Endothelial cell of umbilical vein (primary cell): ENCODE measurements at regions of chr7 and their contacts with region 1.

Region 1: GRCh38 chr7:30459591-30460257 is 18.9 kb downstream of the NOD1 start:
- DNase-seq: peak; percentile 79
- H3K4me3 ChIP-seq: no peak overlapping the region
- H3K27ac ChIP-seq: peak overlapping the region; percentile 56
- H3K4me1 ChIP-seq: peaks cover 18% of the 10 kb centered on the region
- H3K27me3 ChIP-seq: no peaks in the 10 kb centered on the region
- CTCF ChIP-seq: no peak
- POLR2A ChIP-seq: no peak

Region 2: GRCh38 chr7:30478349-30479201 is 18.9 kb after region 1 on chr7 and contains the start of gene NOD1:
- CTCF ChIA-PET with region 1: interaction called, 10 read pairs
- POLR2A ChIA-PET with region 1: interaction called, 3 read pairs
- dilution Hi-C with region 1: no loop called
- intact Hi-C with region 1: no loop called
- DNase-seq: peak; percentile 81
- H3K4me3 ChIP-seq: peak within 1 kb of the TSS; percentile 60 to 92 (median 79)
- H3K27ac ChIP-seq: peak within 1 kb of the TSS; percentile 99
- H3K4me1 ChIP-seq: peaks cover 38% of the 10 kb centered on the region
- H3K27me3 ChIP-seq: no peaks in the 10 kb centered on the region
- CTCF ChIP-seq: no peak
- POLR2A ChIP-seq: no peak
- total RNA-seq, gene NOD1: 39.2 and 39.7 TPM in 2 replicates

Region 3: DNA sequence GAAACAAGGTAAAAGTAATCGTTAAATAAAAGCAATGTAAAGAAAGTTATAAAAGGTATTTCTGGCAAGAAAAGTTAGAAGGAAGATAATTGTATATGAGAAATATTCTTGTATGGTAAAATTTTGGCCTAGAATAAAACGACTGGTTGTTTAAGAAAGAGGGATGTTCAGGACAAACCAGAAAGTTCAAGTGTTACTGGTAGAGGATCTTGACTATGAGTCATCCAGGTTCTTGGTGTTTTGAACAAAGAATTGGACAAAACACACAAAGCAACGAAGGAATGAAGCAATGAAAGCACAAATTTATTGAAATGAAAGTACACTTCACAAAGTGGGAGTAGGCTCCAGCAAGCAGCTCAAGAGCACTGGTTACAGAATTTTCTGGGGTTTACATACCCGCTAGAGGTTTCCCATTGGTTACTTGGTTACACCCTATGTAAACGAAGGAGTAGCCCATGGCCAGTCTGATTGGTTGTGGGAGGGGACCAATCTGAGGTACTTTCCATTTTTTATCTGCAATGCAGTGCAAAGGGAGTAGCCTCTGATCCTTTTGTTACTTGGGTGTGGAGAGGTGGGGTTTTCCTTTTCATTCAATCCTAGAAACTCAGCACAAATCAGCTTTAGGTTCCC is 112.6 kb after region 1 on chr7:
- CTCF ChIA-PET with region 1: no interaction called
- POLR2A ChIA-PET with region 1: no interaction called
- dilution Hi-C with region 1: no loop called
- intact Hi-C with region 1: no loop called
- DNase-seq: no peak
- H3K4me3 ChIP-seq: no peak overlapping the region
- H3K27ac ChIP-seq: no peak overlapping the region
- H3K4me1 ChIP-seq: no peaks in the 10 kb centered on the region
- H3K27me3 ChIP-seq: no peaks in the 10 kb centered on the region
- CTCF ChIP-seq: no peak
- POLR2A ChIP-seq: no peak